WTC11 (cell line): ENCODE measurements at regions of chr10 and their contacts with region 1.

Region 1: GRCh38 chr10:84574102-84574501 is 245.7 kb downstream of the CCSER2 start:
- DNase-seq: no peak
- ATAC-seq: peak; percentile 98
- H3K4me3 Mint-ChIP-seq: no peak overlapping the region
- H3K27ac Mint-ChIP-seq: no peak overlapping the region
- H3K4me1 Mint-ChIP-seq: peaks cover 1% of the 10 kb centered on the region; the same call in 1 of the 2 replicates
- H3K27me3 Mint-ChIP-seq: no peaks in the 10 kb centered on the region
- CTCF ChIP-seq: no peak

Region 2: DNA sequence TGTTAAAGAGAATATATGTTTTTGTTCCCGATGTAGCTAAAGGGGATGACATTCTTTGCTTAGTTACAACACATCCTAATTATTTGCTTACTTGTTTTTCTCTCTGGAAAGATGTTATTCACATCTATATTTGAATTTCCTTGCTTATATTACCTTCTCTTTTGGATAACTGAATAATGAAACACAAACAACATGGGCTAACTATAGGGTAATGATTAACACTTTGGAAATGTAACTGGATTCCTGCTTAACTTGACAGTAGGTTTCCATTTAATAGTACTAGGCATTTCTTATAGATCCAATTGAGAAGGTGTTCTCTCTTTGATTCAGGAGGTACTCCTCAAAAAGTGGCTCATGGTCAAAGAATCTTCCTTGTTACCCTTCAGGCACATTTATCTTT is 104.6 kb before region 1 on chr10:
- CTCF ChIA-PET with region 1: no interaction called
- POLR2A ChIA-PET with region 1: no interaction called
- DNase-seq: no peak
- ATAC-seq: no peak
- H3K4me3 Mint-ChIP-seq: no peak overlapping the region
- H3K27ac Mint-ChIP-seq: no peak overlapping the region
- H3K4me1 Mint-ChIP-seq: peaks cover 20% of the 10 kb centered on the region
- H3K27me3 Mint-ChIP-seq: no peaks in the 10 kb centered on the region
- CTCF ChIP-seq: no peak

Region 3: DNA sequence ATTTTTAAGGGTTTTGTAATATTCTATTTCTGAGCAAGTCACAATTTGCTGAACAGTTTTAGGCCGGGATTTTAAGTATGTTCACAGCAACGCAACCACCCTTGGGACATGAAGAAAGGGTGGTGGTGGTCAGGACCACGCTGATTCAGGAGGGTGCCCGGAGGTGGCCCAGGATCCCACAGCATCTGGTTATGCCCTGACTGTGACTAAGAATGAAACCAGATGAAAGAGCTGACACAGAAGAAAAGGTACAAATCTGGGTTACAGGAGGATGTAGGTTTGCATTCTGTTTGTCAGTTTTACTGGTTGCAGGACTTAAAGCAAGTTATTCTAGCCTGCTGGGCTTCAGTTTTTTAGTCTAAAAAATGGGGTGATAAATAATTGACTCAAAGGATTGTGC is 34.0 kb after region 1 on chr10:
- CTCF ChIA-PET with region 1: interaction called, 30 read pairs
- POLR2A ChIA-PET with region 1: no interaction called
- DNase-seq: no peak
- ATAC-seq: no peak
- H3K4me3 Mint-ChIP-seq: no peak overlapping the region
- H3K27ac Mint-ChIP-seq: no peak overlapping the region
- H3K4me1 Mint-ChIP-seq: peaks cover 21% of the 10 kb centered on the region
- H3K27me3 Mint-ChIP-seq: no peaks in the 10 kb centered on the region; the same call in 1 of the 2 replicates
- CTCF ChIP-seq: no peak